BJ (cell line): ENCODE measurements at regions of chr15 and their contacts with region 1.

Region 1: DNA sequence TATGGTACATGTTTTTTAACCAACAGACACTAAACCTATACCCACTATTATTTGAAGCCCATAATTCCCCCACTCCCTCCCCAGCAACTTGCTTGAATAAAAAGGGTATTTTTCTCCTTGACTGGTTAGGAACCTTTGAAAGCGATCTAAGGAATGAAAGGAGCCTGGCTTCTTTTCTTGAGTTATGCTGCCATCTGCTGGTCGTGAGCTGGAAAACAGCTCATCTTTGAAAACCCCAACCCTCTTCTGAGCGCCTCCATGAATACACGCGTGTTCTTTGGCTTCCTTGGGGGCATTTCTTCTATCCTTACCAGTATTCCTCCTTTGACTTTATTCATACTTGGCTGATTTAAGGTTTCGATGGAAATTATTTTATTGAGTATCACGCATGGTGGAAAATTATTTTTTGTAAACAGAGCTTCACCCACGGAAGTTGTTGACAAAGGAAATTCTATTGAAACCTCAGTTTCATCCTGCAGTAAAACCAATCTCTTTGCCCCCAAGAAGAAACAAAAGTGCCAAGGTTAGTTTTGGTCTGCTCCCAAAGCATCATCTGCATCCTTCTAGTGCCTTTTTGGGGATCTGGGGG is 171.6 kb downstream of the SV2B start:
- DNase-seq: no peak
- H3K4me3 ChIP-seq: no peak overlapping the region
- H3K27me3 ChIP-seq: no peaks in the 10 kb centered on the region
- CTCF ChIP-seq: peak; percentile 77

Region 2: DNA sequence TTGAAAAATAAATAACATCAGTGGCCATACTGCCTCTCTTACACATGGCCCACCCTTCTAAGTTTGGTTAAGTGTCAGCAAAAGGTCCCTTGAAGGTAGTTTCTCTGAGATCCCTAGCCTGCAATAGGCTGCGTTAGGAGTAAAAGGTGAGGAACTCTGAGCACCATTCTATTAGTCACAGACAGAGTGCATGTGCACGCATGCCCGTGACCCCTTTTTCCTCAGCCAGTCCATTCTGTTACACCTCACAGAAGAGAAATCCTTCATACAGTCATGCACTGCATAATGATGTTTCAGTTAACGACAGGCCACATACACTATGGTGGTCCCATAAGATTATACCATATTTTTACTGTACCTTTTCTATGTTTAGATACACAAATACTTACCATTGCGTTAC is 304.5 kb before region 1 on chr15:
- CTCF ChIA-PET with region 1: no interaction called
- POLR2A ChIA-PET with region 1: no interaction called
- DNase-seq: no peak
- H3K4me3 ChIP-seq: no peak overlapping the region
- H3K27me3 ChIP-seq: no peaks in the 10 kb centered on the region
- CTCF ChIP-seq: no peak

Region 3: DNA sequence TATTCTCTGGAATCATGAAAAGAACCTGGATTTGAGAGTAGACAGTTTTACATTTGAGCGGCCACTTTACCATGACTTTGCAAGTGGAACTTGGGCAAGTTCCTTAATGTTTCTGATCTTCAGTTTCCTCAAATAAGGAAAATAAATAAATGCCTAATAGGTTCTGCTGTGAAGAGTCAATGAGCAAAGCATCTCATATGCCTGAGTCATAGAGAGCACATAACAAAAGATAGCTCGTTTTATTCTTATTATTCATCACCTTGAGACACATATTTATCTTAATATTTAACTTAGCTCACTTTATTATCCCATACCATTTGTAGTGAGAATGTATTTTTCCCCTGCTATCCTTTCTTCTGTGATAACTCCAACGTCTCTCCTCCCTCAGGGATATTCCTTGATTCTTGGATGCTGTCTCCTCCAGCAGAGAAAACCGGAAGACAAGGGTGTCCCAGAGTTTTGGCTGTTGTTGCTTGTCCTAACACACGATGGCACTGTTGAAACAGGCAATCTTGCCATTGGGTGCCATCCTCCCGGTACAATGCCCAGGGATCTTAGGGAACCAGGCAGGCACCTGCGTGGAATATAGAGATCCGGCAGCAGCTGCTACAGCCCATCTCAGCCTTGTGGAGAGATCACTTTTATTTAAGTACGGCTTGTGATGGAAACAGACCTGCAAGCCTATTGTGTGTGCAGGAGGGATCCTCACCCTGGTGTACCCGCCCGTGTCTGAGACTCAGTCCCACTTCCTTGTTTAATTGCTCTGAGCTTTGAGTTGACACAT is 215.9 kb before region 1 on chr15:
- CTCF ChIA-PET with region 1: interaction called, 70 read pairs
- POLR2A ChIA-PET with region 1: no interaction called
- DNase-seq: no peak
- H3K4me3 ChIP-seq: no peak overlapping the region
- H3K27me3 ChIP-seq: peaks cover 2% of the 10 kb centered on the region
- CTCF ChIP-seq: peak; percentile 73

Region 4: GRCh38 chr15:91282486-91282885 is 10.8 kb after region 1 on chr15:
- CTCF ChIA-PET with region 1: interaction called, 14 read pairs
- POLR2A ChIA-PET with region 1: no interaction called
- DNase-seq: no peak
- H3K4me3 ChIP-seq: no peak overlapping the region
- H3K27me3 ChIP-seq: no peaks in the 10 kb centered on the region
- CTCF ChIP-seq: no peak

Region 5: GRCh38 chr15:92188916-92189565 is 917.4 kb after region 1 on chr15:
- CTCF ChIA-PET with region 1: no interaction called
- POLR2A ChIA-PET with region 1: no interaction called
- DNase-seq: no peak
- H3K4me3 ChIP-seq: no peak overlapping the region
- H3K27me3 ChIP-seq: no peaks in the 10 kb centered on the region
- CTCF ChIP-seq: no peak